ENCODE measurements at regions of chr11 and their contacts with region 1.

Region 1: DNA sequence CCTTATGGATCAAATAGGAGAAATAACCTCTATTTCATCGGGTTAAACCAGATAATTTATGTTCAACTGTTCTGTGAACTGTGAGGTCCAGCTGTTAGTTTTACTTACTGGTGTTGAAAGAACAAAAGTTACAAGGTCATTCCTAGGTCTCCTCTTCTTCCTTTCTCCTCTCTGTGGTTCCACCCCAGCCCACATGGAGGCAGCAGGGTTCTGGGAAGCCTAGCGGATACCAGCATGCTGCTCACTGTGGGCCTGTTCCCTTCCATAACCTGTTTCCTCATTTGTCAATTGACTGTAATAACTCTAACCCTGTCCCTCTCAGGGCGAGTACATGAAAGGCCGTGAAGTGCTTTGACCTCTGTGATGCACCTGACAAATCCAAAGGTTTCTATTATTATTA is 27.8 kb downstream of the RELT start:
- DNase-seq: peak; percentile 40
- ATAC-seq: peak; percentile 74
- H3K4me3 ChIP-seq: no peak overlapping the region
- H3K27ac ChIP-seq: no peak overlapping the region
- H3K4me1 ChIP-seq: peaks cover 4% of the 10 kb centered on the region; the same call in 1 of the 2 replicates
- H3K27me3 ChIP-seq: no peaks in the 10 kb centered on the region
- CTCF ChIP-seq: peak; percentile 60
- POLR2A ChIP-seq: no peak
- RAD21 ChIP-seq: peak; percentile 76

Region 2: DNA sequence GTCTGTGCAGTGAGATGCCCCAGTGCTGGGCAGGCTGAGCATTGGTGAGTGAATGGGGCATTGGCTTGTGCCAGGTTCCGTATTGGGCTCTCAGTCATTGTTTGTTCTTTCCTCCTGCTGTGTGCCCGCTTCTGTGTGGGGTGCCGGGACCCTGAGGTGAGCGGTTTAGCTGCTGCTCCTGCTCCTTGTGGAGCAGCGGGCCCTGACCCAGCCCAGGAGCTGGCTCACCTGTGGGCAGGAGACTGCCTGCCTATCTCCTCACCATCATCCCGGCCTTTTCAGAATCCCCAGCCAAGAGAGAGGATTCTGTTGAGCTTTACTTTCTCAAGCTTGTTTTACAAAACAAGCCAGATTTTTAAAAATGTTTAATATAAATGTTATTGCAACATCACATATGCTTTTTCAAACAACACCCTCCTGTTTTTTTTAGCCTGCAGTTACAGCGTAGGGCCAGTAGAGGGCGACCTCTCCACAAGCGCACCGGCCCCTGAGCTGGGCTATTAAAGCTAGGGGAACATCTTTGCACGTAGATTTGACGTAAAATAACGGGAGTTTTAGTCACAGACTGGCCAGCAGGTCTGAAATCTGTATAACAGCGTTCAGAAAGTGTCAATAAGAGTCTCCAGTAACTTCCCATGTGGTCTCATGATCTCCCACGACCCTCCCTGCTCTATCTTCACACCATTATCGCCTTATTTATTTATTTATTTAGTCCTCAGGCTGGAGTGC is 53.0 kb before region 1 on chr11:
- CTCF ChIA-PET with region 1: interaction called, 12 read pairs
- POLR2A ChIA-PET with region 1: no interaction called
- dilution Hi-C with region 1: no loop called
- in situ Hi-C with region 1: no loop called
- intact Hi-C with region 1: no loop called
- DNase-seq: peak; percentile 84
- ATAC-seq: peak; percentile 94
- H3K4me3 ChIP-seq: no peak overlapping the region
- H3K27ac ChIP-seq: peak overlapping the region; percentile 63; the same call in 1 of the 2 replicates
- H3K4me1 ChIP-seq: peaks cover 8% of the 10 kb centered on the region; the same call in 1 of the 2 replicates
- H3K27me3 ChIP-seq: no peaks in the 10 kb centered on the region
- CTCF ChIP-seq: peak; percentile 94
- POLR2A ChIP-seq: no peak
- RAD21 ChIP-seq: peak; percentile 74

Region 3: DNA sequence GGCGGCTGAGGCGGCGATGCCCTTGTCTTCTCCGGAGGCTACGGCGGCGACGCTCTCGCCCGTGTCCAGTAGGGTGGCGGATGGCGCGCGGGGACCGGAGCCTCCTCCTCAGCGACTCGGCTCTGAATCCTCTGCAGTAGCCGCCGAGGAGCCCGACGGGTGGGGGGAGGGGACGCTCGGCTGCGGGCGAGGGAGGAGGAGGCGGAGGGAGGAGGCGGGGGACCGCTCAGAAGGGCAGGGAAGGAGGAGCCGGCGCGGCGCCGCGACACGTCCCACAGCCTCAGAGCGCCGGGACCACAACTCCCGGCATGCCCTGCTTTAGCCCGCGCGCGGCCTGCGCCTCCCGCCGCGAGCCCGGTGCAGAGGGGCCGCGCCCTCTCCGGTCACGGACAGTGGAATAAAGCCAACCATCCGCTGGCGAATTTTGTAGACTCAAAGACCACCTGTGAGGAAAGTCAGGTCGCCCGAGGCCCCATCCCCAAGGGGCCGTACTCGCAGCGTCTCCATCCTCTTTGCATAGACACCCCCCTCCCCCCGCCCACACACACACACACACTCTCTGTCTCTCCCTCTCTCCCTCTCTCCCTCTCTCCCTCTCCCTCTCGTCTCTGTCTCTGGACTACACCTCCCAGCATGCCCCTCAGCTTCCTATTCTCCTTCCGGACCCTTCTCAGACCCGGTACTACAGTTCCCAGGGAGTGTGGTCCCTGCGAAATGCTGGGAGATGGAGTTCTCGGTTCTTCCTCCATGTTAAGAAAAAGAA is 194.1 kb after region 1 on chr11 and contains the start of gene FAM168A:
- CTCF ChIA-PET with region 1: no interaction called
- POLR2A ChIA-PET with region 1: no interaction called
- dilution Hi-C with region 1: no loop called
- in situ Hi-C with region 1: no loop called
- intact Hi-C with region 1: loop called (anchors 1 kb)
- DNase-seq: peak; percentile 97
- ATAC-seq: peak; percentile 98
- H3K4me3 ChIP-seq: peak within 1 kb of the TSS; percentile 88
- H3K27ac ChIP-seq: peak within 1 kb of the TSS; percentile 96
- H3K4me1 ChIP-seq: peaks cover 6% of the 10 kb centered on the region; the same call in 1 of the 2 replicates
- H3K27me3 ChIP-seq: no peaks in the 10 kb centered on the region
- CTCF ChIP-seq: peak; percentile 16; the same call in 1 of the 2 replicates
- POLR2A ChIP-seq: no peak
- RAD21 ChIP-seq: peak; percentile 25; the same call in 1 of the 2 replicates
- total RNA-seq, gene FAM168A: 13.1 and 13.6 TPM in 2 replicates

Region 4: GRCh38 chr11:73931039-73931645 is 527.1 kb after region 1 on chr11:
- CTCF ChIA-PET with region 1: no interaction called
- POLR2A ChIA-PET with region 1: no interaction called
- dilution Hi-C with region 1: no loop called
- in situ Hi-C with region 1: no loop called
- intact Hi-C with region 1: loop called (anchors 5 kb)
- DNase-seq: peak; percentile 84
- ATAC-seq: peak; percentile 95
- H3K4me3 ChIP-seq: no peak overlapping the region
- H3K27ac ChIP-seq: no peak overlapping the region
- H3K4me1 ChIP-seq: no peaks in the 10 kb centered on the region
- H3K27me3 ChIP-seq: no peaks in the 10 kb centered on the region
- CTCF ChIP-seq: peak; percentile 64
- POLR2A ChIP-seq: no peak
- RAD21 ChIP-seq: peak; percentile 81